ENCODE measurements at regions of chr19 and their contacts with region 1.

Region 1: GRCh38 chr19:1241417-1242095 is at the start of gene ATP5F1D:
- DNase-seq: peak; percentile 85
- ATAC-seq: peak; percentile 67
- H3K4me3 Mint-ChIP-seq: peak within 1 kb of the TSS; percentile 86
- H3K27ac Mint-ChIP-seq: peak within 1 kb of the TSS; percentile 74
- H3K4me1 Mint-ChIP-seq: peaks cover 53% of the 10 kb centered on the region
- H3K27me3 Mint-ChIP-seq: peaks cover 7% of the 10 kb centered on the region
- CTCF ChIP-seq: no peak
- total RNA-seq, gene ATP5F1D: 172 and 185 TPM in 2 replicates

Region 2: DNA sequence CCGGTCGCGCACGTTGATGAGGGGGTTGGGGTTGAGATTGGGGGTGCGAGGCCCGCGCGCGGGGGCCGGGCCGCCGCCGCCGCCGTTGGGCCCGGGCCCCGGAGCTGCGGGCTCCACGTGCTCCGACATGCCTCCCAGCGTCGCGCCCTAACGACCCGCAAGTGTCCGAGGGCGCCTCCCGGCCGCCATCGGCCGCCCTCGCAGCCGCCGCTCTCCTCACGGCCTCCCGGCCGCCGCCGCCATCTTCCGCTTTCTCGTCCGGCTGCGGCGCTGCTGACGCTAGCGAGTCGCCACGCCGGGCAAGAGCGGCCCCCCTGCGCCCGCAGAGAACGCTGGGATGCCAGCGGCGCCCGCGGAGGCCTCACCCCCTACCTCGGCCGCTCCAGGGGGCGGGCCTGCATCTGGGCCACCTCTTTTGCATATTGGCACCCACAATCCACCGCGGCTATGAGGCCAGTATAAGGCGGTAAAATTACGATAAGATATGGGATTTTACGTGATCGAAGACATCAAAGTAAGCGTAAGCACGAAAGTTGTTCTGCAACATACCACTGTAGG is 220.6 kb before region 1 on chr19 and contains the start of gene TMEM259:
- CTCF ChIA-PET with region 1: interaction called, 3 read pairs
- POLR2A ChIA-PET with region 1: interaction called, 5 read pairs
- intact Hi-C with region 1: loop called (anchors 1 kb)
- DNase-seq: peak; percentile 95
- ATAC-seq: peak; percentile 87
- H3K4me3 Mint-ChIP-seq: peak within 1 kb of the TSS; percentile 87
- H3K27ac Mint-ChIP-seq: peak within 1 kb of the TSS; percentile 99
- H3K4me1 Mint-ChIP-seq: peaks cover 53% of the 10 kb centered on the region
- H3K27me3 Mint-ChIP-seq: no peaks in the 10 kb centered on the region
- CTCF ChIP-seq: no peak
- total RNA-seq, gene TMEM259: 223 and 257 TPM in 2 replicates

Region 3: DNA sequence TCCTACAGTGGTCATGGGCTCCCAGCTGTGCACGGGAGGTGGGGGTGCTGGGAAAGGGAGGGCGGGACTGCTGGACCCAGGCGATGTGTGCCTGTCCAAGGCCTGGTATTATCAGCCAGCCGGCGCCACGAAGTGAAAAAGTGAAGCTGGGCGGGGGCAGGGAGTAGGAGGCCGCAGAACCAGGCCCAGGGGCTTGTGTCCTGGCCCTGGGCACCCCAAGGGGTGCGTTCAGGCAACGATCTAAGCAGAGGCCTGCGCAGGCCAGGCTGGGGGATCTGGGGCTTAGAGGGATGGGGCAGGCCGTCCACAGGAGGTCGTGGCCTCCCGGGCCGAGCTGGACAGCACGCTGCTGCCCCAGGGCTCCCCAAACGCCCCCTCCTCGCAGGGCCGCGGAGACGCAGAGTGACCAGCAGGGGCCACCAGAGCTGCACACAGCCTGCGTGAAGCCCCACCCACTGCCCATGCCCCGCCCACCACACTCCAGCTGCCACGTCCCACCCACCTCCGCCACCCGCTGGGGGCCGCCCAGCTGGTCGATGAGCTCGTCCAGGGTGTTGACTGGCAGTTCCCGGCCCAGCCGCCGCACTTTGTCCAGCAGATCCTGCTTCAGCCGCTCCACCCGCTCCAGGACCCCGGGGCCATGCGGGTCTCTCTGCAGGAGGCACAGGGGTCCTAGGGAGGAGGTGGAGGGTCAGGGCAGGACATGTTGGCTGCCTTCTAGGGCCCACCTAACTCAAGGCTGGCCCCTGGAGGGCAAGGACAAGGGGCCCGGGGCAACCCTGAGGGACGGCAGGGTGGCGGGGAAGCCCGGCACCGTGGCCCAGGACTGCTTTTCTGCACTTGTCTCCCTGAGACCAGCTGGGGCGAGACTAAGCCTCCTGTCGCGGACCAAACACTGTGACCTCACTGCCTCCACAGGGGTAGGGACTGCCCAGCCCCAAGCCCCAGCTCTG is 128.2 kb before region 1 on chr19:
- CTCF ChIA-PET with region 1: interaction called, 10 read pairs
- POLR2A ChIA-PET with region 1: interaction called, 5 read pairs
- intact Hi-C with region 1: loop called (anchors 1 kb)
- DNase-seq: peak; percentile 84
- ATAC-seq: peak; percentile 95
- H3K4me3 Mint-ChIP-seq: no peak overlapping the region
- H3K27ac Mint-ChIP-seq: peak overlapping the region; percentile 41
- H3K4me1 Mint-ChIP-seq: peaks cover 5% of the 10 kb centered on the region
- H3K27me3 Mint-ChIP-seq: no peaks in the 10 kb centered on the region
- CTCF ChIP-seq: no peak

Region 4: GRCh38 chr19:1373534-1374249 is 132.1 kb after region 1 on chr19:
- CTCF ChIA-PET with region 1: interaction called, 8 read pairs
- POLR2A ChIA-PET with region 1: interaction called, 6 read pairs
- intact Hi-C with region 1: loop called (anchors 1 kb)
- DNase-seq: no peak
- ATAC-seq: no peak
- H3K4me3 Mint-ChIP-seq: no peak overlapping the region
- H3K27ac Mint-ChIP-seq: no peak overlapping the region
- H3K4me1 Mint-ChIP-seq: no peaks in the 10 kb centered on the region
- H3K27me3 Mint-ChIP-seq: no peaks in the 10 kb centered on the region
- CTCF ChIP-seq: no peak